ENCODE measurements at regions of chr3 and their contacts with region 1.

Region 1: GRCh38 chr3:186277268-186277909 is 84.6 kb downstream of the DGKG start:
- DNase-seq: no peak
- H3K4me3 ChIP-seq: no peak overlapping the region
- H3K27ac ChIP-seq: no peak overlapping the region
- H3K4me1 ChIP-seq: no peaks in the 10 kb centered on the region
- H3K27me3 ChIP-seq: no peaks in the 10 kb centered on the region
- CTCF ChIP-seq: peak in 2 of 3 experiments; percentile 30 to 42
- POLR2A ChIP-seq: no peak

Region 2: GRCh38 chr3:185677146-185677829 is 600.1 kb before region 1 on chr3:
- intact Hi-C with region 1: loop called (anchors 5 kb)
- DNase-seq: no peak
- H3K4me3 ChIP-seq: no peak overlapping the region
- H3K27ac ChIP-seq: no peak overlapping the region
- H3K4me1 ChIP-seq: no peaks in the 10 kb centered on the region
- H3K27me3 ChIP-seq: no peaks in the 10 kb centered on the region
- CTCF ChIP-seq: peak in 2 of 3 experiments; percentile 38 to 39
- POLR2A ChIP-seq: no peak

Region 3: GRCh38 chr3:185983495-185984141 is 293.8 kb before region 1 on chr3:
- intact Hi-C with region 1: loop called (anchors 10 kb)
- DNase-seq: no peak
- H3K4me3 ChIP-seq: no peak overlapping the region
- H3K27ac ChIP-seq: no peak overlapping the region
- H3K4me1 ChIP-seq: no peaks in the 10 kb centered on the region
- H3K27me3 ChIP-seq: no peaks in the 10 kb centered on the region
- CTCF ChIP-seq: peak; percentile 90
- POLR2A ChIP-seq: no peak